ENCODE measurements at regions of chr9 and their contacts with region 1.

Region 1: DNA sequence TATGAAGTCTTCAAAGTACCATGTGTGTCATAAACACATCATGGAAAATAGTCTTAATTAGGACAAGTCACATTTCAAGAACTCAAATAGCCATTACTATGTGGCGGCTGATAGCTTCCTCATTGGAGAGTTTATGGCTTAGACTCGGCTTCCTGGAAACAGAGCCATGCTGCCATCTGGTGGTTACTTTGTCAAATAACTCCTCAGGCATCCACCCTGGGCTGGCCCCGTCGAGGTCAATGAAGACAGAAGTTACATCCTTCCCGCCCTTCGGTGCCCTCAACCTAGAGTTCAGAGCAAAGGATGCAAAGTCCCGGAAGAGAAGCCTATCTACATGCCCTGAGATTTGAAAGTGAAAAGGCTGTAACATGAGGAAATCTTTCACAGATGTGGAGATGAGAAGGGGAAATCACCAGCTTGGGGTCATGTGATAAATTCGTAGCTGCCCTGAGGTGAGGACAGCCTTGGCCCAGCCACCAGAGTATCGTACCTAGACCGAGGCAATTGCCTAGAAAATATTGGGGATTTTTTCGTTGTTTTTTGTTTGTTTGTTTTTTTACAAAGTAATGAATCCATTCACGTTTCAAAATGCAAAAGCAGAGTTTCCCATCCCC is 45.5 kb upstream of the ZNF169 start:
- DNase-seq: peak; percentile 82
- CTCF ChIP-seq: peak; percentile 65

Region 2: GRCh38 chr9:94061864-94062263 is 151.8 kb before region 1 on chr9:
- in situ Hi-C with region 1: loop called (anchors 5 kb)
- DNase-seq: no peak
- CTCF ChIP-seq: no peak

Region 3: DNA sequence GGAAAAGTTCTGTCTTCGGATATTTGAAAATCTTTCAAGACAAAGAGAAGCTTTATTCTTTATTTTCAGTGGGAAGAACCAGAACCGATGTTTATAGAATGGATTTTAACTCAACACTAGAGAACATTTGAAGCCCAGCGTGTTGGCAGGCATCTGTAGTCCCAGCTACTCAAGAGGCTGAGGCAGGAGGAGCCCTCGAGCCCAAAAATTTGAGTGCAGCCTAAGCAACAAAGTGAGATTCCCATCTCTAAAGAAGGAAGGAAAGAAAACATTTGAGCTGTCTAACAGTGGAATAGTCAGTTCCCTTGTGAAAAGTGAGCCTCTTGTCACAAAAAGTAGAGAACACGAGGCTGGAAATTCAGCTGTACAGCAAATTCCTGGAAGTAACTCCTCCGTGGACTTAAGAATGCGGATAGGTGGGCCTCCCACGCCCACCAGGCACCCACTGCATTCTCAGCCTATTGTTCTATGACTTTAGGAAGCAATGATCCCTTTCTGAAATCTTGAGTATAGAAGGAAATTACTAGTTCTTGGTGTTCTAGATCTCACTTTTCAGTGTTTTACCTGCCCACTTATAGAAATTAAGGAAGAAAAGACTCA is 131.7 kb before region 1 on chr9:
- in situ Hi-C with region 1: no loop called
- DNase-seq: no peak
- CTCF ChIP-seq: no peak

Region 4: GRCh38 chr9:94277885-94278536 is 64.4 kb after region 1 on chr9:
- in situ Hi-C with region 1: no loop called
- DNase-seq: no peak
- CTCF ChIP-seq: no peak

Region 5: GRCh38 chr9:94882966-94883641 is 669.5 kb after region 1 on chr9:
- in situ Hi-C with region 1: no loop called
- DNase-seq: no peak
- CTCF ChIP-seq: no peak

Measured in GM13976 (cell line).